Heart right ventricle (tissue), 16 donors: ENCODE measurements at regions of chr7 and their contacts with region 1.

Region 1: DNA sequence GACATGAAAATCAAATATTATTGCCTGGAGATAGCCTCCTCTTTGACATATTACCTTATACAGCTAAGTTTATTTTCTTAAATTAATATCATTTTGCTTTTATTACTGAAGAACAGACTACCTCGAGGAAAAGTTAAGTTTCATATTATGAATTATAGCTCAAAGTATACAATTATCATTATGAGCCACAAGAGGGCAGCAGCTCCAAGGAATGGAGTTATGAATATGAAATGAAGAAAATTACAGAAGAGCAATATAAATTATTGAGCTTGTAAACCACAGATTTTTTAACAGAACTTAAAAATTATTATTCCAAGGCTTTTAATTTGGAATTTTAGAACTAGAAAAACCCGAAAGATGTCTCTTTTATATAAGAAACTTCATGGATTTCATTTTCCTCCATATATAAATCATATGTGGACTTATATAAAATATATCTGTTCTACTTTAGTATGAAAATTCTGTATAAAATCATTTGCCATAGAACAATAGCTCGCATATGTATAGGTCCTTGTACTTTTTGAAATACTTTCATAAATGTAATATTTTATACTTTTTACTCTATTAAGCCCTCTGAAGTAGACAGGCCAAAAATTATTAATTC is 40.1 kb downstream of the IQUB start:
- DNase-seq: peak in 1 of 2 donors; percentile 26
- ATAC-seq: no peak
- H3K4me3 ChIP-seq: no peak overlapping the region
- H3K27ac ChIP-seq: no peak overlapping the region
- H3K4me1 ChIP-seq: peaks cover 0 to 6% (median 0%) of the 10 kb centered on the region in 9 donors
- H3K27me3 ChIP-seq: no peaks in the 10 kb centered on the region
- CTCF ChIP-seq: peak; percentile 49 to 90 (median 82)

Region 2: GRCh38 chr7:123534383-123535260 is 40.3 kb after region 1 on chr7 and contains the start of gene IQUB:
- intact Hi-C with region 1: loop called in 6 of 10 experiments (anchors 2 to 5 kb)
- DNase-seq: peak; percentile 99
- ATAC-seq: peak; percentile 95 to 99 (median 96)
- H3K4me3 ChIP-seq: peak within 1 kb of the TSS; percentile 37 to 76 (median 64)
- H3K27ac ChIP-seq: peak within 1 kb of the TSS in 9 of 10 donors; percentile 65 to 90 (median 82)
- H3K4me1 ChIP-seq: peaks cover 0 to 31% (median 20%) of the 10 kb centered on the region in 9 donors
- H3K27me3 ChIP-seq: peaks cover 0 to 45% (median 0%) of the 10 kb centered on the region in 7 donors
- CTCF ChIP-seq: no peak
- total RNA-seq, gene IQUB: 0.17 to 0.83 (median 0.53) TPM

Region 3: GRCh38 chr7:123674399-123675180 is 180.3 kb after region 1 on chr7:
- intact Hi-C with region 1: loop called in 1 of 10 experiments (anchors 10 kb)
- DNase-seq: no peak
- ATAC-seq: no peak
- H3K4me3 ChIP-seq: no peak overlapping the region
- H3K27ac ChIP-seq: peak overlapping the region in 7 of 10 donors; percentile 4 to 61 (median 45)
- H3K4me1 ChIP-seq: peaks cover 0 to 54% (median 32%) of the 10 kb centered on the region in 9 donors
- H3K27me3 ChIP-seq: no peaks in the 10 kb centered on the region
- CTCF ChIP-seq: no peak

Region 4: GRCh38 chr7:123871998-123872867 is 377.9 kb after region 1 on chr7:
- intact Hi-C with region 1: loop called in 9 of 10 experiments (anchors 5 to 10 kb)
- DNase-seq: peak; percentile 14 to 15
- ATAC-seq: peak; percentile 42 to 92 (median 82)
- H3K4me3 ChIP-seq: peak overlapping the region in 1 of 10 donors; percentile 12
- H3K27ac ChIP-seq: no peak overlapping the region
- H3K4me1 ChIP-seq: peaks cover 0 to 13% (median 0%) of the 10 kb centered on the region in 9 donors
- H3K27me3 ChIP-seq: no peaks in the 10 kb centered on the region
- CTCF ChIP-seq: peak in 8 of 9 donors; percentile 38 to 71 (median 60)